IMR-90 (cell line): ENCODE measurements at regions of chr1 and their contacts with region 1.

Region 1: DNA sequence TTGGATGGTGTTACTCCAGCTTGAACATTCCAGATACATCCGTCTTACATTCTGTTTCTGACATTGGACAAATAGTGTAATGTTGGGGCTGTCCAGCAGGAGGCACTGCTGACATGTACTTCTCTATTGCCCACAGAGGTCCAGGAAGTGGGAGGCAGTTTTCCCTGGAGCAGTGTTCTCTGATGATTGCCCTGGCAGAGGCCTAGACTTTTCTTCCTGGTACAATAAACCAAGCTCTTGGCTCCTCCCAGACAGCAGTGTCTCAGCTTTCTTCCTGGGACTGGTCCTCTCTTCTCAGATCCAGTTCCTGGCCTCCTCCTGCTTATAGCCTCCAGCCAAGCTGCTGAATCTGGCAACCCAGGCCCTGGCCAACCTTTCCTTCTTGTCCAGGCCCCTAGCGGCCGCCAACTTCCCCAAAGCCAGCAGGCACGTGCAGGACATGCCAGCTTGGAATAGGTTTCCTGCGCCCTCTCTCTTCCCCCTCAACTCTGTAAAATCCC is 14.9 kb upstream of the IFNLR1 start:
- DNase-seq: peak; percentile 86
- ATAC-seq: peak; percentile 98
- H3K4me3 ChIP-seq: no peak overlapping the region
- H3K27ac ChIP-seq: no peak overlapping the region
- H3K4me1 ChIP-seq: peaks cover 2% of the 10 kb centered on the region; the same call in 1 of the 2 replicates
- H3K27me3 ChIP-seq: peaks cover 15% of the 10 kb centered on the region
- CTCF ChIP-seq: peak; percentile 96
- POLR2A ChIP-seq: no peak
- RAD21 ChIP-seq: peak; percentile 95

Region 2: GRCh38 chr1:24070821-24071393 is 131.1 kb before region 1 on chr1:
- CTCF ChIA-PET with region 1: interaction called, 3 read pairs
- POLR2A ChIA-PET with region 1: no interaction called
- dilution Hi-C with region 1: no loop called
- in situ Hi-C with region 1: no loop called
- intact Hi-C with region 1: loop called (anchors 2 kb)
- DNase-seq: peak; percentile 71
- ATAC-seq: peak; percentile 99
- H3K4me3 ChIP-seq: no peak overlapping the region
- H3K27ac ChIP-seq: no peak overlapping the region
- H3K4me1 ChIP-seq: no peaks in the 10 kb centered on the region
- H3K27me3 ChIP-seq: peaks cover 30% of the 10 kb centered on the region; the same call in 1 of the 2 replicates
- CTCF ChIP-seq: peak; percentile 90
- POLR2A ChIP-seq: no peak
- RAD21 ChIP-seq: peak; percentile 88

Region 3: GRCh38 chr1:24253569-24253968 is 51.6 kb after region 1 on chr1:
- CTCF ChIA-PET with region 1: no interaction called
- POLR2A ChIA-PET with region 1: no interaction called
- dilution Hi-C with region 1: no loop called
- in situ Hi-C with region 1: no loop called
- intact Hi-C with region 1: no loop called
- DNase-seq: no peak
- ATAC-seq: no peak
- H3K4me3 ChIP-seq: no peak overlapping the region
- H3K27ac ChIP-seq: no peak overlapping the region
- H3K4me1 ChIP-seq: no peaks in the 10 kb centered on the region
- H3K27me3 ChIP-seq: peaks cover 28% of the 10 kb centered on the region
- CTCF ChIP-seq: no peak
- POLR2A ChIP-seq: no peak
- RAD21 ChIP-seq: no peak

Region 4: DNA sequence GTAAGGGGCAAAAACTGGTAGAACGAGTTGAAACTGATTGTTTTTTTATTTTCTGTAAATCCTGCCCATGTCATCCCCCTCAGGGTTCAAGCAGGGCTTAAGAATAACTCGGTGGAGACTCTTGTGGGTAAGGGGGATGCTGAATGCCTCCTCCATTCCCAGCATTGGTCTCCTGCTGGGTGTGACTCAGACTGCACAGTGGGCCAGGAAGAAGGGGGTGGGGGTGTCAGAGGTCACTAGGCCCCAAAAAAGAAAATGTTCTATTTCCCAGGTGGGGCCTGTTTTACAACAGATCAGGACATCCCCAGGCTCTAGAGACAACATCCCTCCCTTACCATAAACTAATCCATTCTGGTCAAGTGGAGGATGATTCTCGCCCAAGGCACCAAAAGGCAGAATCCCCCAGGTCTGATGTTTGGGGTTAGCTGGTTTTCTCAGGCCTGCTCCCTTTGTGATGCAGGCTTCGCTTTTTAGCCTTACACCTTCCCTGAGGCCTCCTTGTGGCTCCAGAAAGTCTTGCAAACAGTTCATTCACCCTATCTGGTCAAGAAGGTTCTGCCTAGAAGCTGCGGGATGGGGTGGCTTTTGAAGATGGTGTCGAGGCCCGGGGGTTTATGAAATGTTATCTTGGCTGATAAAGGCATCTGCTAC is 106.5 kb after region 1 on chr1:
- CTCF ChIA-PET with region 1: interaction called, 3 read pairs
- POLR2A ChIA-PET with region 1: no interaction called
- dilution Hi-C with region 1: no loop called
- in situ Hi-C with region 1: no loop called
- intact Hi-C with region 1: loop called (anchors 5 kb)
- DNase-seq: no peak
- ATAC-seq: peak; percentile 32; the same call in 1 of the 2 replicates
- H3K4me3 ChIP-seq: no peak overlapping the region
- H3K27ac ChIP-seq: no peak overlapping the region
- H3K4me1 ChIP-seq: no peaks in the 10 kb centered on the region
- H3K27me3 ChIP-seq: peaks cover 43% of the 10 kb centered on the region
- CTCF ChIP-seq: peak; percentile 29
- POLR2A ChIP-seq: no peak
- RAD21 ChIP-seq: peak; percentile 33; the same call in 1 of the 2 replicates

Region 5: DNA sequence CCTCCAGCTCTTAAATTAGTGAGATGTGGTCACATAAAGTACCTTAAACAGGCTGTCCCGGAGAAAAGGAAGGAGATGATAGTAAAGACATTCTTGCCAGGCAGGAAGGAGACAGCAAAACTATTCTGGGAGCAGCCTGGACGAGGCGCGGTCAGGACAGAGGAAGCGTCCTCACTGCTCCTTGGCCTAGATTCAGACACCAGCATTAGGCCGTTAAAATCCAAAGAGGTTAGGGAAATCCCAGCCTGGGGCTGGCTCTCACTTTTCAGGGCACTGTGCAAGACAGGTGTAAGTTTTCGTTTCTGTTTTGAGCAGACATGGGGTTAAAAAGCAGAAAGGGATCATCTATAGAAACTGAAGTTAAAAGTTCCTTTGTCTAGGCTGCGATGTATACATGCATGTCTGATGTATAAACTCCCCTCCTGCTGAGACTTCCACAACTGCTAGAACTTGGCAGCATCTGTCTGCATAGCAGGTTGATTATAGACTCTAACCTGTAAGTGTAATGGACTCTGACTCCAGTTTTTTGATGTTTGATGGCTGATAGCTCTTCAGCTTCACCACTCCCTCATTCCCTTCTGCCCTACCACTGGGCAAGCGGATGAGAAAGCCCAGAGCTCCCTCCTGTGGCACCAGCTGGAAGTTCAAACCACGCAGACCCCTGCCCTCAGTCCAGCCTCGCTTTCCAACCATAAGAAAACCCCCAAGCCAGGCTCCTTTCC is 190.1 kb after region 1 on chr1:
- CTCF ChIA-PET with region 1: interaction called, 170 read pairs
- POLR2A ChIA-PET with region 1: interaction called, 4 read pairs
- dilution Hi-C with region 1: no loop called
- in situ Hi-C with region 1: loop called (anchors 5 kb)
- intact Hi-C with region 1: loop called (anchors 1 kb)
- DNase-seq: peak; percentile 51
- ATAC-seq: peak; percentile 71
- H3K4me3 ChIP-seq: no peak overlapping the region
- H3K27ac ChIP-seq: no peak overlapping the region
- H3K4me1 ChIP-seq: peaks cover 6% of the 10 kb centered on the region
- H3K27me3 ChIP-seq: no peaks in the 10 kb centered on the region
- CTCF ChIP-seq: peak; percentile 77
- POLR2A ChIP-seq: no peak
- RAD21 ChIP-seq: peak; percentile 83

Region 6: DNA sequence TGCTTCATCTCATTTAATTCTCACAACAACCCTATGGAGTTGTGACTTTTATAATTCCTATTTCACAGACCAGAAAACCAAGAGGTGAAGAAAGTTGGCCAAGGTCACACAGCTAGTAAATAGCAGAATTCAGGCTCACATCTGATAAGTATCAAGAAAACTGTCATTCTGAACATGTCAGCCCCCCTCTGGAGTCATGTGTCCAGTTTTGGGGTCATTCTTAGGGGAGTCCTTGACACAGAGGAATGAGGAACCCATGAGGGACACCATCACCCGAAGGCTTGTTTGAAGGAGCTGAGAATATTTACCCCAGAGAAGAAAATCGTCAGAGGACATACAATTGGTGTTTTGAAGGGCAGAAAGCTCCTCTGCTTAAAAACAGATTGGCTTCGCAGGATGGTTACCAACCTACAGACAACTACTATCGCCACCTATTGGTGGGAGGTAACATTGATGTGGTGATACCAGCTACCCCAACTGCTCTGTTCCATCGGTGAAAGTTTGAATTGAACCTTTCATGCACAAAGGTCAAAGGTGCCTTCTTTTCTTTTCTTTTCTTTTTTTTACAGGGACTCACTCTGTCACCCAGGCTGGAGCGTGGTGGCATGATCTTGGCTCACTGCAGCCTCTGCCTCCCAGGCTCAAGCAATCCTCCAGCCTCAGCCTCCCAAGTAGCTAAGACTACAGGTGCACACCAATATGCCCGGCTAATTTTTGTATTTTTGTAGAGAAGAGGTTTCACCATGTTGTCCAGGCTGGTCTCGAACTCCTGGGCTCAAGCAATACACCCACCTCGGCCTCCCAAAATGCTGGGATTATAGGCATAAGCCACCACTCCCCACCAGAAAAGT is 385.2 kb after region 1 on chr1:
- CTCF ChIA-PET with region 1: interaction called, 4 read pairs
- POLR2A ChIA-PET with region 1: no interaction called
- dilution Hi-C with region 1: no loop called
- in situ Hi-C with region 1: no loop called
- intact Hi-C with region 1: loop called (anchors 1 kb)
- DNase-seq: peak; percentile 63
- ATAC-seq: peak; percentile 92
- H3K4me3 ChIP-seq: no peak overlapping the region
- H3K27ac ChIP-seq: no peak overlapping the region
- H3K4me1 ChIP-seq: no peaks in the 10 kb centered on the region
- H3K27me3 ChIP-seq: peaks cover 45% of the 10 kb centered on the region
- CTCF ChIP-seq: peak; percentile 62
- POLR2A ChIP-seq: no peak
- RAD21 ChIP-seq: peak; percentile 64